Mammary epithelial cell (primary cell): ENCODE measurements at regions of chr14 and their contacts with region 1.

Region 1: DNA sequence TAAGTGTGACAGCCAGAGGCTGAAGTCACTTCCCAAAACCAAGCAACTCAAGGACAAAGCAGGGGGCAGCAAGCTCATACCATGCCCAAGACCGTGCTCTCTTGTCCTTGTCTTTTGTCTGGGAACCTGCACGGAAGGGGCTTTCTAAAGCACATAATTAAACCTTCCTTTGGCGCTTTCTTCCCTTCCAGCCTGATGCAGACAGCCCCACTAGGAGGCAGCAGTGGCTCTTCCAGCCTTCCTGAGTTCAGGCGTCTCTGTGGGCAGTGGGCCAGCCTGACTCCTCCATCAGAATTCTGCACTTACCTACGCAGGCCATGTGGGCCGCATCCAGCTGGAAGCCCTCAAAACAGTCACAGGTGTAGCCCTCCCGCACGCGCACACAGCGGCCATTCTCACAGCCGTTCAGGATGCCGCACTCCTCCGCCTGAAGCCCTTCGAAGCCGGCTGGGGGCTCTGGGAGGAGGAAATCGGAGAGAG is 7.6 kb downstream of the ISCA2 start:
- DNase-seq: peak; percentile 66
- H3K4me3 ChIP-seq: no peak overlapping the region
- H3K27ac ChIP-seq: no peak overlapping the region
- H3K4me1 ChIP-seq: peaks cover 20% of the 10 kb centered on the region
- H3K27me3 ChIP-seq: no peaks in the 10 kb centered on the region
- CTCF ChIP-seq: peak; percentile 87 to 88

Region 2: DNA sequence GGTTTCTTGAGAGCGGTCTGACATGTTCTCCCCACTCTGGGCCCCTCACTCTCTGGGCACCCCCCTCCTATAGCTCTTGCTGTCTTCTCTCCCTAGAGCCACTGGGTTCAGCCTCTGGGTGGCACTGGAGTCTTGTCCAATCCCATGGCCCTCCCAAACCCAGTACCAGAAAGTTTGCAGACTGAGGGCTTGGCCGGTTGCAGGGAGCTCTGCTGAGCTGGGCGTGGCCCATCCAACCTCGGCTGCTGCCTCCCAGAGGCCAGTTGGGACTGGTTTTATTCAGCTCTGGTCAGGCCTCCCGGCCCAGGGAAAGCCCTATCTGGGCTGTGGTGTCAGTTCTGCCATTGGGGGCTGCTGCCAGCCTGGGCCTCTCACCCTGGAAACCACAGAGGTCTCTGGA is 30.3 kb after region 1 on chr14:
- CTCF ChIA-PET with region 1: no interaction called
- dilution Hi-C with region 1: no loop called
- in situ Hi-C with region 1: no loop called
- intact Hi-C with region 1: loop called (anchors 1 kb)
- DNase-seq: peak; percentile 65
- H3K4me3 ChIP-seq: no peak overlapping the region
- H3K27ac ChIP-seq: no peak overlapping the region
- H3K4me1 ChIP-seq: peaks cover 21% of the 10 kb centered on the region
- H3K27me3 ChIP-seq: no peaks in the 10 kb centered on the region
- CTCF ChIP-seq: peak; percentile 5 to 43

Region 3: GRCh38 chr14:74571901-74572725 is 70.9 kb after region 1 on chr14:
- CTCF ChIA-PET with region 1: interaction called, 7 read pairs
- dilution Hi-C with region 1: loop called (anchors 5 kb)
- in situ Hi-C with region 1: no loop called
- intact Hi-C with region 1: loop called (anchors 5 kb)
- DNase-seq: peak; percentile 99
- H3K4me3 ChIP-seq: peak overlapping the region; percentile 24 to 37 (median 30)
- H3K27ac ChIP-seq: peak overlapping the region; percentile 98
- H3K4me1 ChIP-seq: peaks cover 85% of the 10 kb centered on the region
- H3K27me3 ChIP-seq: no peaks in the 10 kb centered on the region
- CTCF ChIP-seq: no peak

Region 4: GRCh38 chr14:74593241-74593953 is 92.2 kb after region 1 on chr14:
- CTCF ChIA-PET with region 1: no interaction called
- dilution Hi-C with region 1: no loop called
- in situ Hi-C with region 1: no loop called
- intact Hi-C with region 1: loop called (anchors 5 kb)
- DNase-seq: no peak
- H3K4me3 ChIP-seq: no peak overlapping the region
- H3K27ac ChIP-seq: no peak overlapping the region
- H3K4me1 ChIP-seq: peaks cover 34% of the 10 kb centered on the region
- H3K27me3 ChIP-seq: no peaks in the 10 kb centered on the region
- CTCF ChIP-seq: no peak

Region 5: DNA sequence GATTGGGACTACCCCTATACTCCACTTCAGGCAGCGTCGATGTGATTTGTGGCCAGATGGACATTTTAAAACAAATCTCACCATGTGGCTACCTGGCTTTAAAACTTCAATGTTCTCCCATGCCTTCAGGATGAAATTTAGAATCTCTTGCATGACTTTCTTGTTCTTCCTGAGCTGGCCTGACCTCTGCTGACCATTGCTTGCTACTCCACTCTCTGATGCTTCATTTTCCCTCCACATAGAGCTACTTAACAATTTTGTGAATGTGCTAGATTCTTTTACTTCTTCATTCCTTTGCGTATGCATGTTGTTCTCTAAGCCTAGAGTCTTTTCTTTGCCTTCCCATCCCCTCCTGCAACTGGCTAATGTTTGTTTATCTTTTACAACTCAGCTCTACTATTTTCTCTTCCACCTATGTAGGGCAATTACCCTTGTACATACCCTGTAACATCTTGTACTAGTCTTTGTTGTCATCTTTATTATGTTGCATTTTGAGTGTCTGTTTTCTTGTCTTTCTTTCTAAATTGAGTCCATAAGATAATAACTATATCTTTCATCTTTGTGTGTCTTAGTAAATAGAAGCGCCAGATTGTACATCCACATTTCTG is 303.1 kb after region 1 on chr14:
- CTCF ChIA-PET with region 1: no interaction called
- dilution Hi-C with region 1: no loop called
- in situ Hi-C with region 1: no loop called
- intact Hi-C with region 1: loop called (anchors 1 kb)
- DNase-seq: peak; percentile 33
- H3K4me3 ChIP-seq: no peak overlapping the region
- H3K27ac ChIP-seq: no peak overlapping the region
- H3K4me1 ChIP-seq: no peaks in the 10 kb centered on the region
- H3K27me3 ChIP-seq: no peaks in the 10 kb centered on the region
- CTCF ChIP-seq: peak; percentile 33 to 51